ENCODE measurements at regions of chr12 and their contacts with region 1.

Region 1: GRCh38 chr12:77685112-77685511 is 145.6 kb upstream of the NAV3 start:
- DNase-seq: peak in 3 of 6 donors; percentile 21 to 57 (median 28)
- ATAC-seq: peak in 3 of 4 donors; percentile 83 to 88 (median 86)
- H3K4me3 ChIP-seq: no peak overlapping the region
- H3K27ac ChIP-seq: no peak overlapping the region
- H3K4me1 ChIP-seq: no peaks in the 10 kb centered on the region
- H3K27me3 ChIP-seq: no peaks in the 10 kb centered on the region
- CTCF ChIP-seq: peak in 2 of 4 donors; percentile 17 to 26

Region 2: GRCh38 chr12:77152623-77153193 is 532.4 kb before region 1 on chr12:
- intact Hi-C with region 1: loop called in 1 of 3 experiments (anchors 10 kb)
- DNase-seq: no peak
- ATAC-seq: peak in 1 of 4 donors; percentile 38
- H3K4me3 ChIP-seq: no peak overlapping the region
- H3K27ac ChIP-seq: no peak overlapping the region
- H3K4me1 ChIP-seq: no peaks in the 10 kb centered on the region
- H3K27me3 ChIP-seq: no peaks in the 10 kb centered on the region
- CTCF ChIP-seq: peak in 1 of 4 donors; percentile 14

Region 3: DNA sequence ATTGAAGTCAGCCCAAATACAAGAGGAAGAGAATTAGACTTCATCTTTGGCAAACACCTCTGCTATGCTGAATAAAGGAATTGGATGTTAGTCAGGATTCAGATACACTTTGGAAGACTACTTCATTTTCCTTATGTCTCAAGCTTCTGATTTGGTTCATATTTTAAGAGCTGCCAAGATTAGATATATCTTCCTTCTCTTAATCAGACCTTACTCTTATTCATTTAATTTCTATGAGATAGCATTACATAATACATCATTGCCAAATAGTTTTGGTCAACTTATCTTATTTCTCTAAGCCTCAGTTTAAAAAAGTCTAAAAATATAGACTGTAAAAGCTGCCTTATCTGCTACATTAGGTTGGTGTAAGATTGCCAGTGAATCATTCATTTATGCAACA is 185.0 kb before region 1 on chr12:
- intact Hi-C with region 1: no loop called
- DNase-seq: no peak
- ATAC-seq: no peak
- H3K4me3 ChIP-seq: no peak overlapping the region
- H3K27ac ChIP-seq: no peak overlapping the region
- H3K4me1 ChIP-seq: no peaks in the 10 kb centered on the region
- H3K27me3 ChIP-seq: no peaks in the 10 kb centered on the region
- CTCF ChIP-seq: no peak

Region 4: GRCh38 chr12:77907936-77908335 is 222.8 kb after region 1 on chr12:
- intact Hi-C with region 1: no loop called
- DNase-seq: no peak
- ATAC-seq: no peak
- H3K4me3 ChIP-seq: no peak overlapping the region
- H3K27ac ChIP-seq: no peak overlapping the region
- H3K4me1 ChIP-seq: no peaks in the 10 kb centered on the region
- H3K27me3 ChIP-seq: no peaks in the 10 kb centered on the region
- CTCF ChIP-seq: no peak